Psoas muscle (tissue), 8 donors: ENCODE measurements at regions of chr14 and their contacts with region 1.

Region 1: GRCh38 chr14:75399821-75400678 is 27.8 kb upstream of the JDP2 start:
- DNase-seq: peak; percentile 93 to 96
- ATAC-seq: peak; percentile 95 to 97 (median 96)
- H3K4me3 ChIP-seq: peak overlapping the region; percentile 26
- H3K27ac ChIP-seq: peak overlapping the region; percentile 86
- H3K4me1 ChIP-seq: peaks cover 19% of the 10 kb centered on the region
- H3K27me3 ChIP-seq: no peaks in the 10 kb centered on the region
- CTCF ChIP-seq: no peak

Region 2: DNA sequence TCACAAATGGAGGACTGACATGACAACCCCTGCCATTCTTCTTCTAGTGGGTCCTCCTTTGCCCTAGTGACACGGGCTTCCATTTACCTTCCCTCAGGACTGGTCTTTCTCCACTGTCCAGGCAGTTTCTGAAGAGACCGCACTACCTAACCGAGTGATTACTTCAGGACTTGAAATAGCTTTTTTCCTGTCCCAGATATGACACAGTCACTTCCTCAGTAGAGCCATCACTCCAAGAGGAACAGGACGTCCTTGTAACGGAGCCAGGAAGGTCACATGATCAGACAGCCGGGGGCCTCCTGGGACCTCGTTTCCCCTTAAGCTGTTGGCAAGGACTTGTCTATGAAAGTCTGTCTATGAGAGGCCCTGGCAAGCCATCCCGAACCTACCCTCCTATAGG is 59.1 kb before region 1 on chr14:
- intact Hi-C with region 1: loop called (anchors 2 to 5 kb)
- DNase-seq: peak; percentile 93 to 97
- ATAC-seq: peak; percentile 89 to 93 (median 92)
- H3K4me3 ChIP-seq: peak overlapping the region; percentile 51
- H3K27ac ChIP-seq: peak overlapping the region; percentile 92
- H3K4me1 ChIP-seq: peaks cover 41% of the 10 kb centered on the region
- H3K27me3 ChIP-seq: no peaks in the 10 kb centered on the region
- CTCF ChIP-seq: no peak

Region 3: GRCh38 chr14:75361751-75362433 is 38.2 kb before region 1 on chr14:
- intact Hi-C with region 1: loop called in 1 of 2 experiments (anchors 5 kb)
- DNase-seq: peak; percentile 61 to 79
- ATAC-seq: peak in 3 of 4 donors; percentile 11 to 55 (median 12)
- H3K4me3 ChIP-seq: no peak overlapping the region
- H3K27ac ChIP-seq: no peak overlapping the region
- H3K4me1 ChIP-seq: peaks cover 4% of the 10 kb centered on the region
- H3K27me3 ChIP-seq: no peaks in the 10 kb centered on the region
- CTCF ChIP-seq: no peak

Region 4: GRCh38 chr14:75370416-75371205 is 29.4 kb before region 1 on chr14:
- intact Hi-C with region 1: loop called in 1 of 2 experiments (anchors 1 kb)
- DNase-seq: no peak
- ATAC-seq: peak in 3 of 4 donors; percentile 52 to 72 (median 69)
- H3K4me3 ChIP-seq: no peak overlapping the region
- H3K27ac ChIP-seq: peak overlapping the region; percentile 72
- H3K4me1 ChIP-seq: peaks cover 31% of the 10 kb centered on the region
- H3K27me3 ChIP-seq: no peaks in the 10 kb centered on the region
- CTCF ChIP-seq: no peak

Region 5: DNA sequence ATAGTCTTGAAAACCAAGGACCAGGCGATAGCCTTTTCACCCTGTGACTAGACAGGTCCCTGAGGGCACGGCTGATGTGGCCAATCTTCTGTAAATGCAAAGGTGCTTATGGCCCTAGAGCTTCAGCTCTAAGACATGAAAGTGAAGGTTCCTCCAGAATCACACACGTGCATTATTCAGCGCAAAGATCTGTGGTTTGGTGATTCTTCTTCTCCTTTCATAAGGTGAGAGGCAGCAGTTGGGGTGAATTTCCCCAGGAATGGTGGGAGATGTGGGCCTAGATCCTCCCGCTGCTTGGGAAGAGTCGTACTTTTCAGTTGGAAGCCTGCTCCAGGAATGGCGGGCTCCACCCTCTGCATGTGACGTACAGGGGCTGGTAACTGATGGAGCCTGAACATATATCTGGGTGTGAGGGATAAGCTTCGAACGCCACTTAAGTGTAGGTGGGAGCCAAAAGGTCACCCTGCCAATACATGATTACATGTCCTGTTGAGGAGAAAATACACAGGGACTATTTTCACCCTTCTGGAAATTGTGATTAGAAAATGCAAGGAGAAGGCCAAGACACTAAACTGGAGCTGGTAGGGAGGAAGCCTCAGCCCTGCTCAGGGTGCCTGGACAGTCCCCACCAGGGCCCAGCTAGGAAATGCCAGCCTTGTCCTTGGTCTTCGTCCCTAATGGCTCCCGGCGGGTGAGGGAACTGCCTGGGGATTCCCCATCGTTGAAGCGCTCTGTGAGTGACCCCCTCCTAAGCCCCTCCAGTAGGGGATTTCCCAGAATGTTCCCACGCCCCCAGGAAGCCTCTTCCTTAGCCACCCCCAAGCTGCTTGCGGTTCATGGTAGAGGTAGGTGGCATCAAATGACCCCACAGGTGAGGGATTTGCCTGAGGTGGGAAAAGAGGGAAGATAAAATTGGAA is 139.8 kb after region 1 on chr14:
- intact Hi-C with region 1: no loop called
- DNase-seq: no peak
- ATAC-seq: no peak
- H3K4me3 ChIP-seq: no peak overlapping the region
- H3K27ac ChIP-seq: no peak overlapping the region
- H3K4me1 ChIP-seq: peaks cover 13% of the 10 kb centered on the region
- H3K27me3 ChIP-seq: no peaks in the 10 kb centered on the region
- CTCF ChIP-seq: no peak